ENCODE measurements at regions of chr1 and their contacts with region 1.

Region 1: DNA sequence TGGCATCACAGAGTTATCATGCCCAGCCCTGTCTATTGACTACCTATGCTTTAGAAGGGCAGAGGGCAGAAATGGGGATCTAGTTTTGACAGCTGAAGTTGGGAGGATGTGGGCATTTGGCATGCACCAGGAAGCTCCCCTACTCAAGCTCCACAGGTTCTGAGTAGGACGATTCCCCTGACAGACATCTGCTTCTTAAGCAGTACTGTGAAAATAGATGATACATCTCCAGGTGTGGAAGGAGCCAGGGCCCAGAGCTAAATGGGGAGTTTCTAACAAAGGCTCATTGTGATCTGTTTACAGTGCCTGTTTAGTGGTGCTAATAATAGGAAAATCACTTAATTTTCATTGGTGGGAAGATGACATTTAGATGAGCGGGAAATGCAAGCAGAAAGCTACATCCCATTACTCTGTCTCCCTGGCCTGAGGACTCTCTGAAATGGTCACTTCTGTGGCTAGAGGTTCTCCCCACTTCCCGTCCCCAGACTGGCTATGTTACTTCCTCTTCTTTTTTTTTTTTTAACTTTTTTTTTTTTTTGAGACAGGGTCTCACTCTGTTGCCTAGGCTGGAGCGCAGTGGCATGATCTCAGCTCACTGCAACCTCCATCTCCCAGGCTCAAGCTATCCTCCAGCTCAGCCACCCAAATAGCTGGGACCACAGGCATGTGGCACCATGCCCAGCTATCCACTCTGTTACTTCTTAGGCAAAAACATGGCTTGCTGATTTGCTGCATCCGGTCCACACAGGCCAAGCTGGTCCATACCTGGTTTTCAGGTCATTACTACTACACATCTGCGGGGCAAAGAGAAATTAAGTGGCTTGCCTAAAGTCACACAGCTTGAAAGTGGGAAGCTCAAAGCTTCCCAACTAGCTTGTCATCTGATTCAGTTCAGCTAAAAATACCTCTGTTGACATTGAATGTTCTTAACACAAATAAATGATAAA is 23.2 kb upstream of the CNIH3 start:
- DNase-seq: no peak
- H3K4me3 ChIP-seq: no peak overlapping the region
- H3K27ac ChIP-seq: no peak overlapping the region
- H3K4me1 ChIP-seq: peaks cover 0 to 18% (median 11%) of the 10 kb centered on the region in 4 experiments; a peak in 4 of 7 replicates
- H3K27me3 ChIP-seq: no peaks in the 10 kb centered on the region
- CTCF ChIP-seq: no peak
- EP300 ChIP-seq: no peak
- POLR2A ChIP-seq: no peak
- RAD21 ChIP-seq: no peak

Region 2: DNA sequence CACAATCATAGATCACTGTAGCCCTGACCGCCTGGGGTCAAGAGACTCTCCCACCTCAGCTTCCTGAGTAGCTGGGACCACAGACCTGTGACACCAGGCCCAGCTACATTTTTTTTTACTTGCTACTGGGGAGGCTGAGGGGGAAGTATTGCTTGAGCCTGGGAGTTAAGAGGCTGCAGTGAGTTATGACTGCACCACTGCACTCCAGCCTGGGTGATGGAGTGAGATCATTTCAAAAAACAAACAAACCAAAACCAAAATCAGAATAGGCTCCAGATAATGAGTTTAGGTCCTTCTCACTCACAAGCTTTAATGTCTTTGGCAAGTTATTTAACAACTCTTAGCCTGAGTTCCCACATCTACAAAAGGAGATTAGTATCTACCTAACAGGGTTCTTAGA is 181.1 kb before region 1 on chr1:
- CTCF ChIA-PET with region 1: no interaction called
- POLR2A ChIA-PET with region 1: no interaction called
- DNase-seq: no peak
- H3K4me3 ChIP-seq: no peak overlapping the region
- H3K27ac ChIP-seq: no peak overlapping the region
- H3K4me1 ChIP-seq: no peaks in the 10 kb centered on the region
- H3K27me3 ChIP-seq: no peaks in the 10 kb centered on the region
- CTCF ChIP-seq: no peak
- EP300 ChIP-seq: no peak
- POLR2A ChIP-seq: no peak
- RAD21 ChIP-seq: no peak

Region 3: GRCh38 chr1:224644553-224645154 is 51.7 kb after region 1 on chr1:
- CTCF ChIA-PET with region 1: interaction called, 16 read pairs
- POLR2A ChIA-PET with region 1: no interaction called
- DNase-seq: peak; percentile 41 to 79
- H3K4me3 ChIP-seq: no peak overlapping the region
- H3K27ac ChIP-seq: no peak overlapping the region
- H3K4me1 ChIP-seq: no peaks in the 10 kb centered on the region
- H3K27me3 ChIP-seq: no peaks in the 10 kb centered on the region
- CTCF ChIP-seq: peak; percentile 61 to 88 (median 87)
- EP300 ChIP-seq: no peak
- POLR2A ChIP-seq: no peak
- RAD21 ChIP-seq: peak; percentile 82 to 86